Activated naive CD4-positive, alpha-beta T cell treated with anti-CD3 and anti-CD28 coated beads for 36 hours (primary cell): ENCODE measurements at regions of chr13 and their contacts with region 1.

Region 1: DNA sequence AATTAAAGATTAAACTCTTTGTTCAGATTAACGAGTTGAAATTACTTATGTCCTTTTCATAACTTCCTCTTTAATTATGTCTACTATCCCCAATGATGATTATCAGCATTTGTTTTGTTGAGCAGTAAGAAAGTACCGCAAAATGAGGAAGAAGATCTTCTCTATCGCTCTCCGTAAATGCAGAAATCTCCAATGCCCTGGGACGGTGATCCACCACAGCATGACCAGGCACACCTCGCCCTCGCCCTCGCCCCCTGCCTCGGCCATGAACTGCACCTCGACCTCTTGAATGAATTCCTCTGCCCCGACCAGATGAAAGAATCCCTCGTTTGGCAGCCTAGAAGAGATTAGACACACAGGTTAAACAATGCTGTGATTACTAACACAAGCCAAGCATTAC is 69.1 kb downstream of the RBM26 start:
- DNase-seq: no peak
- H3K4me3 Mint-ChIP-seq: no peak overlapping the region
- H3K27ac Mint-ChIP-seq: no peak overlapping the region
- H3K4me1 Mint-ChIP-seq: peaks cover 6% of the 10 kb centered on the region
- H3K27me3 Mint-ChIP-seq: no peaks in the 10 kb centered on the region

Region 2: GRCh38 chr13:79374578-79374977 is 37.6 kb after region 1 on chr13:
- CTCF ChIA-PET with region 1: no interaction called
- intact Hi-C with region 1: loop called (anchors 5 kb)
- DNase-seq: no peak
- H3K4me3 Mint-ChIP-seq: no peak overlapping the region
- H3K27ac Mint-ChIP-seq: no peak overlapping the region
- H3K4me1 Mint-ChIP-seq: peaks cover 3% of the 10 kb centered on the region
- H3K27me3 Mint-ChIP-seq: no peaks in the 10 kb centered on the region